BJ (cell line): ENCODE measurements at regions of chr3 and their contacts with region 1.

Region 1: DNA sequence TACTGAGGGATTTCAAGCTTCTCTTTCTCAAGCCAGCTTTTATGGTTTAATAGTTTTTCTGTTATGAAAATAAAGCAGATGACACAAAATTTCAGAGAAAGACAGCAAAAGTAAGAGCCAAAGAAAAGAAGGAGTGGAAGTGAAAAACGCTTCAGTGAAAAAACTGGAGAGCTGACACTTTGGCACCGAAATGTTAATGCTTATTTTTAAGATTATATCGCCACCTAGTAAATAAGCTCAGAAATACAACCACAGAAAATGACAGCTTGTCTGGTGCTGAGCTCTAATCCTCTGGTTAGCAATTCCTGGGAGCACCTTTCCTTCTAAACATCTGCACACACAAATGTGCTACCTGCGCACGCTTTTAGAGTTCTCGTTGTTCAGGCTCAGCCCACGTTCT is 101.6 kb downstream of the ZPLD1 start:
- DNase-seq: no peak
- H3K4me3 ChIP-seq: no peak overlapping the region
- H3K27me3 ChIP-seq: no peaks in the 10 kb centered on the region
- CTCF ChIP-seq: peak; percentile 36

Region 2: GRCh38 chr3:102235679-102236078 is 300.8 kb before region 1 on chr3:
- CTCF ChIA-PET with region 1: interaction called, 50 read pairs
- POLR2A ChIA-PET with region 1: no interaction called
- DNase-seq: no peak
- H3K4me3 ChIP-seq: no peak overlapping the region
- H3K27me3 ChIP-seq: peaks cover 2% of the 10 kb centered on the region; the same call in 1 of the 2 replicates
- CTCF ChIP-seq: peak; percentile 64